ENCODE measurements at regions of chr17 and their contacts with region 1.

Region 1: DNA sequence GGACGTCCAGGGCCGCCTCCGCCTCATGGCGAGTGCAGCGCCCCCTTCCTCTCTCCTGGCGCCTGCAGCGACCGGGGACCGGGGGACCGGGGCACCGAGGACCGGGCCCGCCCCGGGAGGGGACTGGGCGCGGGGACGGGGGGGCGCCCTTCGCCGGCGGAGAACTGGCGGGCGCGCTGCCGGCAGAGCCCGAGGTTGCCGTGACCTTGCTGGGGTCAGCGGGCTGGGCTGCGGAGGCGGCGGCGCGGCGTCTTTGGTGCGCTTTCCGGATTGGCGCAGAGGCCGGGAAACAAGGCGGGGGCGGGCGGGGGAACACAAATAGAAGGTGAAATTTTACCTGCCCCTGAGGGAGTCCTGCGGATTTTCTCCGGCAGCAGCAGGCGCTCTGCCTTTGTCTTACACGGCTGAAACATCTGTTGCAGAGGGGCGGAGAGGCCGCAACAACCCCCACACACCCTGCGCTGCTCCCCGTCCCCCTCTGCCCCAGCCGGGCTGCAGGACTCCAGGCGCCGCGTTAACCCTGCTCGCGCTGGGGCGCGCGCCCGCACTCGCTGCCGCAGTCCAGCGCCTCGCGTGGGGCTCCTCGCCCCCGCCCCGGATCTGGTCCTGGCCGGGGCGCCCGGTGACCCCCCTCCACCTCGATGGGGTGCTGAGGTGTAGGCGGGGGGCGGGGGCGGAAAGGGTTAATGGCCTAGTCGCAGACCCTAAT is 53.5 kb downstream of the SREBF1 start:
- DNase-seq: peak; percentile 53
- H3K4me3 Mint-ChIP-seq: peak overlapping the region; percentile 45
- H3K27ac Mint-ChIP-seq: no peak overlapping the region
- H3K4me1 Mint-ChIP-seq: peaks cover 6% of the 10 kb centered on the region
- H3K27me3 Mint-ChIP-seq: peaks cover 21% of the 10 kb centered on the region

Region 2: GRCh38 chr17:17694169-17695081 is 88.8 kb before region 1 on chr17:
- intact Hi-C with region 1: loop called (anchors 5 kb)
- DNase-seq: peak; percentile 65
- H3K4me3 Mint-ChIP-seq: peak overlapping the region; percentile 80
- H3K27ac Mint-ChIP-seq: peak overlapping the region; percentile 98
- H3K4me1 Mint-ChIP-seq: peaks cover 57% of the 10 kb centered on the region
- H3K27me3 Mint-ChIP-seq: no peaks in the 10 kb centered on the region

Region 3: GRCh38 chr17:17723354-17724261 is 59.7 kb before region 1 on chr17:
- intact Hi-C with region 1: loop called (anchors 5 kb)
- DNase-seq: no peak
- H3K4me3 Mint-ChIP-seq: peak overlapping the region; percentile 82
- H3K27ac Mint-ChIP-seq: no peak overlapping the region
- H3K4me1 Mint-ChIP-seq: peaks cover 25% of the 10 kb centered on the region
- H3K27me3 Mint-ChIP-seq: peaks cover 31% of the 10 kb centered on the region

Region 4: GRCh38 chr17:17752089-17752820 is 31.0 kb before region 1 on chr17:
- intact Hi-C with region 1: loop called (anchors 5 kb)
- DNase-seq: peak; percentile 96
- H3K4me3 Mint-ChIP-seq: peak overlapping the region; percentile 89
- H3K27ac Mint-ChIP-seq: peak overlapping the region; percentile 93
- H3K4me1 Mint-ChIP-seq: peaks cover 39% of the 10 kb centered on the region
- H3K27me3 Mint-ChIP-seq: no peaks in the 10 kb centered on the region

Measured in activated T-helper 2 cell treated with anti-CD3 and anti-CD28 coated beads, Interferon-gamma antibody, Interleukin-2, Interleukin-4, amounts not matched to agents 10 μg/mL and 5 μg/mL and 100 μg/mL, durations not matched to agents 14 hours and 24 hours and 36 hours (primary cell).